ENCODE measurements at regions of chr4 and their contacts with region 1.

Region 1: DNA sequence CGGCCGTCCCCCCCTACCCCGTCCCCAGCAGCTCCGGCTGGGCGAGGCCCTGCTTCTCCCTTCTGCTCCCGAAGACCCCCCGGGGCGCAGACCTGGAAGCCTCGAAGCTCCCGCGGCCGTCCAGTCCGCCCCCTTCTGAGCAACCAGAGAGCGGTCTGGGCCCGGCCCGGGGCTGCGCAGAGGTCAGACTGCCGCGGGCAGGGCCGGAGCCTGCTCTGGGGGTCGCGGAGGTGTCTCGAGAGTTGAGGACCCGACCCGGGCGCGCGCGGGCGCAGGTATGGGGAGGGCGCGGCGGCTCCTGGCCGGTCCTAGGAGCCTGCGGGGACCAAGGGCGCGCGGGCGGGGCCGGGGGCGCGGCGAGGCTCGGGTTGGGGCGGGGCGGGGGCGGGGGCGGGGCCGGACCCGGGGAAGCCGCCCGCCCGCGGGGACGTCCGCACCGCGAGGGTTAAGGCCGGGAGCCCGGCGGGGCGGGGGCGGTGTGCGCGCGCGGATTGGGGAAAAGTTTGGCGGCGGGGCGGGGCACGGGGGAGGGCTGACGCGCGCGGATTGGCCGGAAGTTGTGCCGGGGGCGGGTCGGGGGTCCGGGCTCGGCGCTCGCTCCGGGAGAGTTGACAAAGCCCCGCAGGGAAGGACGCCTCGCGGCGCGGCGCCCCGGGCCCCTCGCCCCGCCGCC is at the start of gene FGFRL1:
- DNase-seq: peak; percentile 89
- H3K4me3 Mint-ChIP-seq: peak within 1 kb of the TSS; percentile 82
- H3K27ac Mint-ChIP-seq: peak within 1 kb of the TSS; percentile 89
- H3K4me1 Mint-ChIP-seq: peaks cover 9% of the 10 kb centered on the region
- H3K27me3 Mint-ChIP-seq: peaks cover 25% of the 10 kb centered on the region
- total RNA-seq, gene FGFRL1: 17.5 TPM in 2 replicates

Region 2: DNA sequence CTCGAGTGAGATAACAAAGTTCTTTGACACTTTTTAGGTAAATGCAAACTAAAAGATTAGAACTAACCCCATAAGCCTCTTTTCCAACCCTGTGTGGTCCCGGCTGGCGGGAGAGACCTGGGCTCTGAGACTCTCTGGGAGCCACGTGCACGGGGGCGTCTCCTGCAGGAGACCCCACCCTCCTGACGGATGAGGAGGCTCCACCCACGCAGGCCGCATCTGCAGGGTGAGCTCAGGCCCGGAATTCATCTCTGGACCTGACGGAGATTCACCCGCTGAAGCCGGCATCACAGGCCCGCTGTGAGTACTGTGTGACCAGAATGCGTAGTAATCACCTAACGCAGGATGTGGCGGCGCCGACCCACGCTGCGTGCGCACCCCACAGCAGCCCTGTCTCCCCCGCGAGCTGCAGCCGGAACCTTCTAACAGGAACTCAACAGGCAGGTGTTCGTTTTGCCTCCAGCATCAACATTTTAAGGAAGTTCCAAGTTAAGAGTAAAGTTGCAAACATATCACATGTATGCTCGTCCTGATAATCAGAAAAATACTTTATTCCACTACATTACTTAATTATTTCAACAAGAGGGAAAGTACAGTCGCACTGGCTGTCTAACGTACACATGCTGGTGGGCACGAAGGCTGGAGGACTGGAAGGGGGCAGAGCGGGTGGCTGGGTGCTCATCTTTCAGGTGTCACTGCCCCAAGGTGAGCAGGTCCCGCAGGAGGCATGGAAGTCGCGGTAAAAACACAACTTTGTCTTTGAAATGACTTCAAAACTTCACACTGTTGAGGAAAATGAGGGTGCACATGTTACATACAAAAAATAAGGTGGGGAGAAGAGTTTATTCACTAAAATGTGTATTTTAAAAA is 44.8 kb after region 1 on chr4:
- intact Hi-C with region 1: loop called (anchors 5 kb)
- DNase-seq: peak; percentile 69
- H3K4me3 Mint-ChIP-seq: peak overlapping the region; percentile 46
- H3K27ac Mint-ChIP-seq: peak overlapping the region; percentile 17
- H3K4me1 Mint-ChIP-seq: peaks cover 9% of the 10 kb centered on the region
- H3K27me3 Mint-ChIP-seq: peaks cover 11% of the 10 kb centered on the region

Measured in activated T-helper 2 cell treated with anti-CD3 and anti-CD28 coated beads, Interferon-gamma antibody, Interleukin-2, Interleukin-4, amounts not matched to agents 10 μg/mL and 5 μg/mL and 100 μg/mL, durations not matched to agents 14 hours and 24 hours and 36 hours (primary cell).